ENCODE measurements at regions of chr22 and their contacts with region 1.

Region 1: GRCh38 chr22:36194971-36195370 is 6.6 kb downstream of the APOL4 start:
- DNase-seq: peak; percentile 68 to 76 (median 72)
- ATAC-seq: peak; percentile 23 to 60 (median 48)
- H3K4me3 ChIP-seq: no peak overlapping the region
- H3K27ac ChIP-seq: peak overlapping the region in 1 of 12 donors; percentile 1
- H3K4me1 ChIP-seq: peaks cover 0 to 73% (median 35%) of the 10 kb centered on the region in 12 donors
- H3K27me3 ChIP-seq: no peaks in the 10 kb centered on the region
- CTCF ChIP-seq: peak; percentile 58 to 89 (median 80)
- POLR2A ChIP-seq: no peak

Region 2: GRCh38 chr22:36221799-36222751 is 27.1 kb after region 1 on chr22:
- intact Hi-C with region 1: loop called in 3 of 10 experiments (anchors 2 kb)
- DNase-seq: peak in 3 of 5 donors; percentile 41 to 59 (median 58)
- ATAC-seq: peak; percentile 68 to 83 (median 74)
- H3K4me3 ChIP-seq: no peak overlapping the region
- H3K27ac ChIP-seq: no peak overlapping the region
- H3K4me1 ChIP-seq: peaks cover 0 to 32% (median 16%) of the 10 kb centered on the region in 12 donors
- H3K27me3 ChIP-seq: no peaks in the 10 kb centered on the region
- CTCF ChIP-seq: peak; percentile 55 to 78 (median 64)
- POLR2A ChIP-seq: no peak

Region 3: GRCh38 chr22:36277482-36278291 is 82.7 kb after region 1 on chr22:
- intact Hi-C with region 1: loop called in 9 of 10 experiments (anchors 1 to 5 kb)
- DNase-seq: peak in 3 of 5 donors; percentile 57 to 62 (median 60)
- ATAC-seq: peak; percentile 38 to 80 (median 63)
- H3K4me3 ChIP-seq: peak overlapping the region in 3 of 12 donors; percentile 1 to 14 (median 13)
- H3K27ac ChIP-seq: peak overlapping the region in 2 of 12 donors; percentile 18 to 24
- H3K4me1 ChIP-seq: peaks cover 0 to 15% (median 9%) of the 10 kb centered on the region in 12 donors
- H3K27me3 ChIP-seq: no peaks in the 10 kb centered on the region
- CTCF ChIP-seq: peak; percentile 65 to 87 (median 76)
- POLR2A ChIP-seq: no peak

Region 4: GRCh38 chr22:36481393-36482168 is 286.6 kb after region 1 on chr22 and contains the start of gene TXN2:
- intact Hi-C with region 1: loop called in 5 of 10 experiments (anchors 2 to 10 kb)
- DNase-seq: peak; percentile 97 to 99 (median 98)
- ATAC-seq: peak; percentile 95 to 98 (median 96)
- H3K4me3 ChIP-seq: peak within 1 kb of the TSS; percentile 32 to 89 (median 76)
- H3K27ac ChIP-seq: peak within 1 kb of the TSS; percentile 97 to 100 (median 99)
- H3K4me1 ChIP-seq: peaks cover 0 to 28% (median 14%) of the 10 kb centered on the region in 12 donors
- H3K27me3 ChIP-seq: no peaks in the 10 kb centered on the region
- CTCF ChIP-seq: no peak
- POLR2A ChIP-seq: peak in 1 of 2 donors; percentile 69
- total RNA-seq, gene TXN2: 87.9 to 128 (median 113) TPM

Region 5: DNA sequence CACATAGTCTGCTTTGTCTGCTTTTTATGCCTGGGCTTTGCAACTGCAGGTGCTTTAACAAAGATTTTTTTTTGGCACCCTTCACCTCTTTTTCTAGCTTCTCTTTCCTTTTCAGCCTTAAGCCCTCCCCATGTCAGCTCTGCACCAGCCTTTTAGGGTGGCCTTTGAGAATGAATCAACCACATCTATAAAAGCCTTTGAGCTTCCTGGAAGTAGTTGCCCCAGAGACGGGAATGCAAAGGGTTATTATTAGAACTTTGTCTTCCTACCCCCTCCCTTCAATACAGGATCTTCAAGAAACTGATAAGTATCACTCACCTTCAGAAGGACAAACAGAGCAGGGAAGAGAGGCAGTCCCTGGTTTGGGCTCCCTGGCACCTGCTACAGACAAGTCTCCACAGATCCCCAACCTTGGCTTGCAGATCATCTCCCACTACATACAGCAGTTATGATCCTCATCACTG is 613.8 kb after region 1 on chr22:
- intact Hi-C with region 1: no loop called
- DNase-seq: no peak
- ATAC-seq: no peak
- H3K4me3 ChIP-seq: no peak overlapping the region
- H3K27ac ChIP-seq: no peak overlapping the region
- H3K4me1 ChIP-seq: peaks cover 0 to 10% (median 0%) of the 10 kb centered on the region in 12 donors
- H3K27me3 ChIP-seq: peaks cover 0 to 50% (median 12%) of the 10 kb centered on the region in 9 donors
- CTCF ChIP-seq: no peak
- POLR2A ChIP-seq: no peak